Calu3 (cell line): ENCODE measurements at regions of chr22 and their contacts with region 1.

Region 1: DNA sequence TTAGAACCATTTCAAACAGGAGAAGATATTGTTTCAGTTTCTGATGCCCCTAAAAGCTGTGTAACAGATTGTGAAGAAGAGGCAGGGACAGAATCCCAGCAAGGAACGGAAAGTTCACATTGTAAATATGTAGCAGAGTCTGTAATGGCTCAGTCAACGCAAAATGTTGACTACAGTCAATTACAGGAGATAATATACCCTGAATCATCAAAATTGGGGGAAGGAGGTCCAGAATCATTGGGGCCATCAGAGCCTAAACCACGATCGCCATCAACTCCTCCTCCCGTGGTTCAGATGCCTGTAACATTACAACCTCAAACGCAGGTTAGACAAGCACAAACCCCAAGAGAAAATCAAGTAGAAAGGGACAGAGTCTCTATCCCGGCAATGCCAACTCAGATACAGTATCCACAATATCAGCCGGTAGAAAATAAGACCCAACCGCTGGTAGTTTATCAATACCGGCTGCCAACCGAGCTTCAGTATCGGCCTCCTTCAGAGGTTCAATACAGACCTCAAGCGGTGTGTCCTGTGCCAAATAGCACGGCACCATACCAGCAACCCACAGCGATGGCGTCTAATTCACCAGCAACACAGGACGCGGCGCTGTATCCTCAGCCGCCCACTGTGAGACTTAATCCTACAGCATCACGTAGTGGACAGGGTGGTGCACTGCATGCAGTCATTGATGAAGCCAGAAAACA is 40.8 kb downstream of the IGLL1 start:
- DNase-seq: peak; percentile 80
- H3K4me3 Mint-ChIP-seq: peak overlapping the region; percentile 39
- H3K27ac Mint-ChIP-seq: no peak overlapping the region
- H3K4me1 Mint-ChIP-seq: peaks cover 36% of the 10 kb centered on the region
- H3K27me3 Mint-ChIP-seq: peaks cover 8% of the 10 kb centered on the region
- CTCF ChIP-seq: peak; percentile 89

Region 2: GRCh38 chr22:23591201-23591791 is 52.0 kb after region 1 on chr22:
- CTCF ChIA-PET with region 1: interaction called, 4 read pairs
- intact Hi-C with region 1: loop called (anchors 1 kb)
- DNase-seq: peak; percentile 80
- H3K4me3 Mint-ChIP-seq: no peak overlapping the region
- H3K27ac Mint-ChIP-seq: no peak overlapping the region
- H3K4me1 Mint-ChIP-seq: no peaks in the 10 kb centered on the region
- H3K27me3 Mint-ChIP-seq: peaks cover 40% of the 10 kb centered on the region
- CTCF ChIP-seq: peak; percentile 90

Region 3: GRCh38 chr22:23849009-23850006 is 310.0 kb after region 1 on chr22:
- CTCF ChIA-PET with region 1: no interaction called
- intact Hi-C with region 1: loop called (anchors 5 kb)
- DNase-seq: peak; percentile 94
- H3K4me3 Mint-ChIP-seq: peak overlapping the region; percentile 70
- H3K27ac Mint-ChIP-seq: no peak overlapping the region
- H3K4me1 Mint-ChIP-seq: no peaks in the 10 kb centered on the region
- H3K27me3 Mint-ChIP-seq: peaks cover 8% of the 10 kb centered on the region
- CTCF ChIP-seq: peak; percentile 95